ENCODE measurements at regions of chr13 and their contacts with region 1.

Region 1: GRCh38 chr13:44280456-44280855 is 93.2 kb upstream of the SERP2 start:
- DNase-seq: no peak
- H3K4me3 ChIP-seq: no peak overlapping the region
- H3K4me3 Mint-ChIP-seq: no peak overlapping the region
- H3K27ac ChIP-seq: no peak overlapping the region
- H3K27ac Mint-ChIP-seq: no peak overlapping the region
- H3K4me1 ChIP-seq: no peaks in the 10 kb centered on the region
- H3K4me1 Mint-ChIP-seq: peaks cover 2% of the 10 kb centered on the region
- H3K27me3 ChIP-seq: no peaks in the 10 kb centered on the region
- H3K27me3 Mint-ChIP-seq: peaks cover 9 to 10% (median 10%) of the 10 kb centered on the region in 3 donors
- CTCF ChIP-seq: no peak

Region 2: DNA sequence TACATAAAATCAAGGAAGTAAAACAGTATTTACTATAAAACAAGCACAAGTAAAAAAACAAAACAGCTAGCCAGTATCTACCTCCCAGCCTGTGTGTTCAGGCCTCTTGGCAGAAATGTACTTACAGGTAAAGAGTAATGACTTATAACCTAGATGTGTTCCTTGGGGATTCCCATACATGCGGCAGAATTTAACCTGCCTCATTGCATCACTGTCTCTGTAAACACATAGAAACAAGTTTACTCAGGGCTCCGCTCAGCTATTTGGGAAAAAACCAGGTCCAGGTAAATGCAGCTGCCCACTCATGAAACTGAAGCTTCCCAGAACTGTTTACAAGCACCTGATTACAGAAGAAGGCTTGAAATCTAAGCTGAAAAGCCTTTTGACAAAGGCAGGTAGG is 42.5 kb after region 1 on chr13:
- intact Hi-C with region 1: loop called in 1 of 2 experiments (anchors 5 kb)
- DNase-seq: no peak
- H3K4me3 ChIP-seq: no peak overlapping the region
- H3K4me3 Mint-ChIP-seq: no peak overlapping the region
- H3K27ac ChIP-seq: no peak overlapping the region
- H3K27ac Mint-ChIP-seq: no peak overlapping the region
- H3K4me1 ChIP-seq: no peaks in the 10 kb centered on the region
- H3K4me1 Mint-ChIP-seq: no peaks in the 10 kb centered on the region
- H3K27me3 ChIP-seq: no peaks in the 10 kb centered on the region
- H3K27me3 Mint-ChIP-seq: peaks cover 0 to 3% (median 0%) of the 10 kb centered on the region in 3 donors
- CTCF ChIP-seq: no peak

Measured in CD14-positive monocyte (primary cell).